IMR-90 (cell line): ENCODE measurements at regions of chr6 and their contacts with region 1.

Region 1: GRCh38 chr6:150380256-150380655 is 11.4 kb downstream of the IYD start:
- DNase-seq: no peak
- ATAC-seq: no peak
- H3K4me3 ChIP-seq: no peak overlapping the region
- H3K27ac ChIP-seq: no peak overlapping the region
- H3K4me1 ChIP-seq: no peaks in the 10 kb centered on the region
- H3K27me3 ChIP-seq: no peaks in the 10 kb centered on the region
- CTCF ChIP-seq: no peak
- POLR2A ChIP-seq: no peak
- RAD21 ChIP-seq: no peak

Region 2: DNA sequence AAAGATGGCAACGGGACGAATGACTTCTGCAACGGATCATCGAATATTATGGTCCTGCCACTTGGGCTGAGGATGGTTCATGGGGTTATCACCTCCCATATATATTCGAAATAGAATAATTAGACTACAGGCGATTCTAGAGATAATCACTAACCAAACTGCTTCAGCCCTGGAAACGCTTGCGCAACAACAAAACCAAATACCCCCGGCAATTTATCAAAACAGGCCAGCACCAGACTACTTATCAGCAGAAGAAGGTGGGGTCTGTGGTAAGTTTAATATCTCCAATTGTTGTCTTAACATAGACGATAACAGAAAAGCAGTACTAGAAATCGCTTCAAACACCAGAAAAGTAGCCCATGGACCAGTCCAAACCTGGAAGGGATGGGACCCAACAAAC is 280.3 kb before region 1 on chr6:
- CTCF ChIA-PET with region 1: no interaction called
- POLR2A ChIA-PET with region 1: no interaction called
- dilution Hi-C with region 1: no loop called
- in situ Hi-C with region 1: no loop called
- intact Hi-C with region 1: no loop called
- DNase-seq: no peak
- ATAC-seq: no peak
- H3K4me3 ChIP-seq: no peak overlapping the region
- H3K27ac ChIP-seq: no peak overlapping the region
- H3K4me1 ChIP-seq: no peaks in the 10 kb centered on the region
- H3K27me3 ChIP-seq: peaks cover 23% of the 10 kb centered on the region
- CTCF ChIP-seq: no peak
- POLR2A ChIP-seq: no peak
- RAD21 ChIP-seq: no peak

Region 3: GRCh38 chr6:150167479-150167873 is 212.8 kb before region 1 on chr6:
- CTCF ChIA-PET with region 1: no interaction called
- POLR2A ChIA-PET with region 1: no interaction called
- dilution Hi-C with region 1: no loop called
- in situ Hi-C with region 1: no loop called
- intact Hi-C with region 1: no loop called
- DNase-seq: no peak
- ATAC-seq: no peak
- H3K4me3 ChIP-seq: no peak overlapping the region
- H3K27ac ChIP-seq: no peak overlapping the region
- H3K4me1 ChIP-seq: no peaks in the 10 kb centered on the region
- H3K27me3 ChIP-seq: no peaks in the 10 kb centered on the region
- CTCF ChIP-seq: no peak
- POLR2A ChIP-seq: no peak
- RAD21 ChIP-seq: no peak

Region 4: GRCh38 chr6:150395398-150396009 is 15.2 kb after region 1 on chr6:
- CTCF ChIA-PET with region 1: interaction called, 10 read pairs
- POLR2A ChIA-PET with region 1: no interaction called
- dilution Hi-C with region 1: no loop called
- in situ Hi-C with region 1: no loop called
- intact Hi-C with region 1: no loop called
- DNase-seq: peak; percentile 51
- ATAC-seq: peak; percentile 88
- H3K4me3 ChIP-seq: no peak overlapping the region
- H3K27ac ChIP-seq: no peak overlapping the region
- H3K4me1 ChIP-seq: no peaks in the 10 kb centered on the region
- H3K27me3 ChIP-seq: no peaks in the 10 kb centered on the region; the same call in none of the 2 replicates
- CTCF ChIP-seq: peak; percentile 66
- POLR2A ChIP-seq: no peak
- RAD21 ChIP-seq: peak; percentile 65

Region 5: DNA sequence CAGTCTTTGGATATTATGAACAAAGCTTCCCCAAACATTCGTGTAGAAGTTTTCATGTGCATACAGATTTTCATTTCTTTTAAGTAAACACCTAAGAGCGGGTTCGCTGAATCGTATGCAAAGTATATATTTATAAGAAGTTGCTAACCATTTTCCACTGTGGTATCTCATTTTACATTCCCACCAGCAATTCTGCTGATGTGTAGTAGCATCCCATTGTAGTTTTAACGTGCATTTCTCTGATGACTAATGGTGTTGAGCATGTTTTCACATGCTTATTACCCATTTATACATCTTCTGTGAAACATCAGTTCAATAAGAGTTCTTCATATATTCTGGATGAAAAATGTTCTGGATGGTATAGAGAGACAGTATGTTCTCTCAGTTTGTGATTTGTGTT is 85.9 kb after region 1 on chr6:
- CTCF ChIA-PET with region 1: no interaction called
- POLR2A ChIA-PET with region 1: no interaction called
- dilution Hi-C with region 1: no loop called
- in situ Hi-C with region 1: no loop called
- intact Hi-C with region 1: no loop called
- DNase-seq: no peak
- ATAC-seq: no peak
- H3K4me3 ChIP-seq: no peak overlapping the region
- H3K27ac ChIP-seq: no peak overlapping the region
- H3K4me1 ChIP-seq: no peaks in the 10 kb centered on the region
- H3K27me3 ChIP-seq: no peaks in the 10 kb centered on the region
- CTCF ChIP-seq: no peak
- POLR2A ChIP-seq: no peak
- RAD21 ChIP-seq: no peak